Activated B cell treated with CpG ODN at 0.5 μM for 24 hours (primary cell): ENCODE measurements at regions of chr21 and their contacts with region 1.

Region 1: DNA sequence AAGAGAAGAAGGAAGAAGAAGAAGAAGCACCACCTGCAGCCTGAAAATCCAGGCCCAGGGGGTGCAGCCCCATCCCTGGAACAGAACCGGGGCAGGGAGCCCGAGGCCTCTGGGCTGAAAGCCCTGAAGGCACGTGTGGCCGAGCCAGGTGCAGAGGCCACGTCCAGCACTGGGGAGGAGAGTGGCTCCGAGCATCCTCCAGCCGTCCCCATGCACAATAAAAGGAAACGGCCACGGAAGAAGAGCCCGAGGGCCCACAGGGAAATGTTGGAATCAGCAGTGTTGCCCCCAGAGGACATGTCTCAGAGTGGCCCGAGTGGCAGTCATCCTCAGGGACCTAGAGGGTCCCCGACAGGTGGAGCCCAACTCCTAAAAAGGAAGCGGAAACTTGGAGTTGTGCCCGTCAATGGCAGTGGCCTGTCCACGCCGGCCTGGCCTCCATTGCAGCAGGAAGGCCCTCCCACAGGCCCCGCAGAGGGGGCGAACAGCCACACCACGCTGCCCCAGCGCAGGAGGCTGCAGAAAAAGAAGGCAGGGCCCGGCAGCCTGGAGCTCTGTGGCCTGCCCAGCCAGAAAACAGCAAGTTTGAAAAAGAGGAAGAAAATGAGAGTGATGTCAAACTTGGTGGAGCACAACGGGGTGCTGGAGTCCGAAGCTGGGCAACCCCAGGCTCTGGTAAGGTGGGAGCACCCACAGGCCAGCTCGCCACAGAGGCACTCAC is 28.4 kb downstream of the RRP1B start:
- DNase-seq: peak; percentile 28
- ATAC-seq: peak; percentile 86
- H3K4me3 Mint-ChIP-seq: no peak overlapping the region
- H3K27ac Mint-ChIP-seq: peak overlapping the region; percentile 56
- H3K4me1 Mint-ChIP-seq: peaks cover 17% of the 10 kb centered on the region
- H3K27me3 Mint-ChIP-seq: no peaks in the 10 kb centered on the region
- CTCF ChIP-seq: no peak

Region 2: DNA sequence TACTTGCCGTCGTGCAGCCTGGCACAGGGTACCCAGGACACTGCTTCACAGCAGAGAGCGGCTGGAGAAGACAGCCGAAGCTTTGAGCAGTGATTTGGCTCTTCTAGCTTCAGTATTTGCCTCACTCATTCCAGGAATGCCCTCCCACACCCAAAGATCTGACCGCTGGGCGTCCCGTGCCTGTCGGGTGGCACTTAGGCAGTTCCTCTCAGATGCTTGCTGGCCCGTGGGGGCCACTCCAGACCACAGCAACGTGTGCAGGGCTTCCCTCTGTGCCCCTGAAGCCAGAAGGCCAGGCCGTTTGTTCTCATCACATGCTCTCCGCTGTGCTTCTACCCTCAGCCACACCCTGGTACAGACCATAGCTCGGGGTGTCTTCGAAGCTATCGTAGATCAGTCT is 11.3 kb before region 1 on chr21:
- CTCF ChIA-PET with region 1: no interaction called
- POLR2A ChIA-PET with region 1: no interaction called
- intact Hi-C with region 1: no loop called
- DNase-seq: no peak
- ATAC-seq: no peak
- H3K4me3 Mint-ChIP-seq: no peak overlapping the region
- H3K27ac Mint-ChIP-seq: no peak overlapping the region
- H3K4me1 Mint-ChIP-seq: no peaks in the 10 kb centered on the region
- H3K27me3 Mint-ChIP-seq: no peaks in the 10 kb centered on the region
- CTCF ChIP-seq: no peak

Region 3: GRCh38 chr21:43775795-43776430 is 88.2 kb after region 1 on chr21 and contains the start of gene CSTB:
- CTCF ChIA-PET with region 1: no interaction called
- POLR2A ChIA-PET with region 1: no interaction called
- intact Hi-C with region 1: loop called (anchors 1 kb)
- DNase-seq: peak; percentile 78
- ATAC-seq: peak; percentile 78
- H3K4me3 Mint-ChIP-seq: peak within 1 kb of the TSS; percentile 84
- H3K27ac Mint-ChIP-seq: peak within 1 kb of the TSS; percentile 68
- H3K4me1 Mint-ChIP-seq: peaks cover 34% of the 10 kb centered on the region
- H3K27me3 Mint-ChIP-seq: no peaks in the 10 kb centered on the region
- CTCF ChIP-seq: no peak
- total RNA-seq, gene CSTB: 16.0 and 17.1 TPM in 2 replicates